Activated CD4-positive, alpha-beta memory T cell treated with anti-CD3 and anti-CD28 coated beads for 36 hours (primary cell): ENCODE measurements at regions of chr6 and their contacts with region 1.

Region 1: DNA sequence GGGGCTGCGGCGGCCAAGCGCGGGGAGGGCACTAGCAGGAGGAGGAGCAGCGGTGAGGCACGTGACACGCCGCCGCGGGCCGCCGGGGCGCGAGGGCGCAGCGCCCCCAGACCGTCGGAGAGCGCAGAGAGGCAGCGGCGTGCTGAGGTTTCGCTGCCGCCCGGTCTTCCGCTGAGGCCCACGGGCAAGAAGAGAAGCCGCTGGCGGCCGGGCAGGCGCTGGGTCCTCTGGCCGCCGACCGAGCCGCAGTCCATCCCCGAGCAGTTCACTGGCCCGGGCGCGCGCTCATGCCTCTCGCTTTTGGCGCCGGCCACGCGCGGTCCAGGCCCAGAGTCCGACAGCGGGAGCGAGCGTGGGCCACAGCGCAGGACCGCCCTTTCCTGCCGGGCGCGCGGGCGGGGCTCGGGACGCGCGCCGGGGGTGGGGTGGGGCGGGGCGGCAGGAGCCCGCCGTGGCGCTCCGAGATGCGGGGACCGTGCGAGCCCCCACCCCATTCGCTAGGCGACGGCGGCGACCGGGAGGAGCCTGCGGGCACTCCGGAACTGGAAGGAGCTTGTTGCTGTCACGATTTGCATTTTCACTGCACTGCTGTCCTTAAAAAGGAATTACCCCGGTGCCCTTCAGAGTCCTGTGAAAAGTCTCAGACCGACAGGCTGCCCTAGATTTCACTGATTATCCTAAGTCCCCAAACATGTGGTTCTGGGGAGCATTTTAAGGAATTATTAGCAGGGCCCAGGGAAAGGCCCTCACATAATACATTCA is at the start of gene MCUR1:
- DNase-seq: peak; percentile 90
- H3K4me3 Mint-ChIP-seq: peak within 1 kb of the TSS; percentile 87
- H3K27ac Mint-ChIP-seq: peak within 1 kb of the TSS; percentile 84
- H3K4me1 Mint-ChIP-seq: peaks cover 28% of the 10 kb centered on the region
- H3K27me3 Mint-ChIP-seq: no peaks in the 10 kb centered on the region
- total RNA-seq, gene MCUR1: 36.6 to 38.8 TPM

Region 2: DNA sequence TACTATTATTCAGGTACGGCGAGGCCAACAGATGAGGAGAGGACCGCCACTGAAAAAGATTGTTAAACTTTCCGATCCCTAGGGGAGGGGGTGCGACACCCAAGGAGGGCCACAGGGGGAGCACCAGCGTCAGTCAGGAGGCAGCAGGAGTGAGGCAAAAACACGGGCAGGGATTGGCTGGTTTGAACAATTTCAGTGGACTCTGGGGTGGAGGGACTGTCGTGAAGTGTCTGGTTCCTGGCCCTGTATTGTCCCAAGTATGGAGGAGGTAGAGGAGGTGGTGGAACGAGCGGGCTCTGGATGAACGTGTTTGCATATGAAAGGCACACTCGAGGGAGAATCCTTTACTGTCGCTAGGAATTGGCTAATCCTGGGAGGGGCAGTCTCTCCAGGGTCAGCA is 32.5 kb after region 1 on chr6:
- CTCF ChIA-PET with region 1: no interaction called
- POLR2A ChIA-PET with region 1: no interaction called
- intact Hi-C with region 1: no loop called
- DNase-seq: no peak
- H3K4me3 Mint-ChIP-seq: no peak overlapping the region
- H3K27ac Mint-ChIP-seq: no peak overlapping the region
- H3K4me1 Mint-ChIP-seq: peaks cover under 1% of the 10 kb centered on the region
- H3K27me3 Mint-ChIP-seq: peaks cover 4% of the 10 kb centered on the region

Region 3: DNA sequence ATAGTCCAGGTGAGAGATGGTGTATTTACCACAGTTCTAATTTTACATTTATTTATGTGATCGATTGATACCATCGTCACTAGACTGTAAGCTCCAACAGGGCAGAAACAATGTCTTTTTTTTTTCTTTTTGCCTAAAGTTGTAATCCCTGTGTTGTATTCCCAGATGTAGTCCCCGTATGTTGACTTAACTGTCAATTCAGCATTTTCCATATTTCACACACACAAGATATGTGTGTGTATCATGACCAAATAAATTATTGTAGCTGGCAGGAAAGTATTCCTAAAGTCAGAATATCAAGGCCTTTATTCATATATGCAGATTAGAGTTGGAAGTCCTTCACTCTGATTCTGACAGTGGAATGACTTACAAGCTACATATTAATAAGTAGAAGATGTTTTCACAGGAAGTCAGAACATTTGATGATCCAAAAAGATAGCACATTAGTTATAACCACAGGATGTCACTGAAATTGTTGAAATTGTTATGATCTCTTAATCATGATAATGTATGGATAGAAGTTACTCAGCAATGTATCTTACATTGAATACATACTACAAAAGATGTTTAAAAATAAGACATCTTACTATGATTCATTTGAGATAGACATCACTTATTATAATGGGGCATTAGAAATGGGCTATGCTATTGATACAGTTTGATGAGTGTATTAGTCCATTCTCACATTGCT is 121.0 kb after region 1 on chr6:
- CTCF ChIA-PET with region 1: no interaction called
- POLR2A ChIA-PET with region 1: no interaction called
- intact Hi-C with region 1: no loop called
- DNase-seq: no peak
- H3K4me3 Mint-ChIP-seq: no peak overlapping the region
- H3K27ac Mint-ChIP-seq: no peak overlapping the region
- H3K4me1 Mint-ChIP-seq: peaks cover 13% of the 10 kb centered on the region
- H3K27me3 Mint-ChIP-seq: peaks cover 13% of the 10 kb centered on the region

Region 4: GRCh38 chr6:14117158-14118090 is 303.1 kb after region 1 on chr6 and contains the start of gene CD83:
- CTCF ChIA-PET with region 1: no interaction called
- POLR2A ChIA-PET with region 1: no interaction called
- intact Hi-C with region 1: loop called (anchors 2 kb)
- DNase-seq: peak; percentile 81
- H3K4me3 Mint-ChIP-seq: peak within 1 kb of the TSS; percentile 86
- H3K27ac Mint-ChIP-seq: peak within 1 kb of the TSS; percentile 76
- H3K4me1 Mint-ChIP-seq: peaks cover 37% of the 10 kb centered on the region
- H3K27me3 Mint-ChIP-seq: no peaks in the 10 kb centered on the region
- total RNA-seq, gene CD83: 21.8 to 23.0 TPM